HepG2 (cell line): ENCODE measurements at regions of chr5 and their contacts with region 1.

Region 1: GRCh38 chr5:120803282-120803681 is 339.2 kb downstream of the PRR16 start:
- DNase-seq: no peak
- ATAC-seq: no peak
- H3K4me3 ChIP-seq: no peak overlapping the region
- H3K27ac ChIP-seq: no peak overlapping the region
- H3K4me1 ChIP-seq: no peaks in the 10 kb centered on the region
- H3K27me3 ChIP-seq: no peaks in the 10 kb centered on the region
- CTCF ChIP-seq: no peak
- EP300 ChIP-seq: no peak
- POLR2A ChIP-seq: no peak
- RAD21 ChIP-seq: no peak

Region 2: GRCh38 chr5:120655828-120656435 is 147.3 kb before region 1 on chr5:
- CTCF ChIA-PET with region 1: no interaction called
- POLR2A ChIA-PET with region 1: no interaction called
- in situ Hi-C with region 1: no loop called
- intact Hi-C with region 1: loop called (anchors 5 kb)
- DNase-seq: peak; percentile 18
- ATAC-seq: peak; percentile 81
- H3K4me3 ChIP-seq: no peak overlapping the region
- H3K27ac ChIP-seq: no peak overlapping the region
- H3K4me1 ChIP-seq: no peaks in the 10 kb centered on the region
- H3K27me3 ChIP-seq: no peaks in the 10 kb centered on the region
- CTCF ChIP-seq: peak; percentile 69
- EP300 ChIP-seq: no peak
- POLR2A ChIP-seq: no peak
- RAD21 ChIP-seq: no peak; the same call in 1 of the 2 replicates